IMR-90 (cell line): ENCODE measurements at regions of chr1 and their contacts with region 1.

Region 1: DNA sequence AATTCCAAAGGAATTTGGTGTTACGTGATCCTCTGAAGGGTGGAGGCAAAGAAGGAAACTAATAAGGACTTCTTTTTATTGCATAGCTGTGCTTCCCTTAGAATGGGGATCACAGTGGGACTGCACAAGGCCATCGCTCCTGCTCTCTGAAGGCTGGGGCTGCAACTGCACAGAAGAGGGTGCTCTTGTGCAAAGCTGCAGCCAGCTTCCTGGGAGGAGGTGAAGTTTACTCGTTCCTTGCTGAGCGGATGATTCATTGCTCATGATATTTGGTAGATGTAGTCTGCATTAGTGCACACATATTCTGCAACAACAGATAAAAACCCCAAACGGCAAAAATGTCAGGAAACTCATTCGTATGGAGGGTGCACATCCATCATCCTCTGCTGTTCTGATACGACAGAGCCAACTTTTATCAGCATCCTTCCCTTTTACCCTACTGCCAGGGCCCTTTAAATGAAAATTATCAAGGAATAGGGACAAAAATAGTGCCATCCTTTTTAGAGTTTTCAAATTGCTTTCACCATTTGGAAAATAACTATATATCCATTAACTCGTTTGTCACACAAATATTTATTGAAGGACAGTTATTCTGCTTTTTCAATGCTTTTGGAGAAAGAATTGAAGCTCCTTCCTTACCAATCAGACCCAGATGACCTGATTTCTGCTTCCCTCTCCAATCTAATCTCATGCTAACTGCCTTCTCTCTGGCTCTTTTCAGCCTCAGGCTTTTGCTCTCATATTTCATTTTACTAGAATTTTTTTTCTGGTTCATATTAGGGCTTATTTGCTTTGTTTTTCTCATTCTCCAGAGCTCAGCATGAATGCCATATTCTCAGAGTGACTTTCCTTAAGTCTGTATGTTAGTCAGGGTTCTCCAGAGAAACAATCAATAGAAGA is 263.6 kb downstream of the DUSP10 start:
- DNase-seq: peak; percentile 91
- ATAC-seq: peak; percentile 100
- H3K4me3 ChIP-seq: no peak overlapping the region
- H3K27ac ChIP-seq: no peak overlapping the region
- H3K4me1 ChIP-seq: 0 out of 2 replicates have a peak, but pooled peaks cover 2% of the 10 kb centered on the region
- H3K27me3 ChIP-seq: no peaks in the 10 kb centered on the region
- CTCF ChIP-seq: peak; percentile 90
- POLR2A ChIP-seq: peak; percentile 49; the same call in 1 of the 2 replicates
- RAD21 ChIP-seq: peak; percentile 98

Region 2: DNA sequence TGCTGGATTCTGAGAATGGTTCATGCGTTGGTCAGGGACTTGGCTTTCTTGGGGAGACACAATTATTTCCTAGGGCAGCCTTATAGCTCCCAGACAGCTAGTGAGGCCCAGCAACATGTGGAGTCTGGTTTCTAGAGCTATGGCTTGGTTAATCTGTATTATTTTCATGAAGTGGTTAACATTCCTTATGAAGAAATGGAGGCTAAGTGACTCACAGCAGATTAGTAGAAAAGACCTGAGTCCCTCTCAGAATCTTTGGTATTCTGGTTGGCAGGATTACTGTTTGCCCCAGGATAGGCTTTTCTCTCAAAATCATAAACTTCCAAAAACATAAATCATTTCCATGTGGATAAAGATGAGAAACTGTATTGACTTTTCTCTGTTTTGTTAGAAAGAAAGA is 221.3 kb after region 1 on chr1:
- CTCF ChIA-PET with region 1: interaction called, 12 read pairs
- POLR2A ChIA-PET with region 1: no interaction called
- dilution Hi-C with region 1: no loop called
- in situ Hi-C with region 1: no loop called
- intact Hi-C with region 1: no loop called
- DNase-seq: peak; percentile 75
- ATAC-seq: peak; percentile 50
- H3K4me3 ChIP-seq: no peak overlapping the region
- H3K27ac ChIP-seq: peak overlapping the region; percentile 35; the same call in 1 of the 2 replicates
- H3K4me1 ChIP-seq: peaks cover 19% of the 10 kb centered on the region
- H3K27me3 ChIP-seq: no peaks in the 10 kb centered on the region
- CTCF ChIP-seq: no peak
- POLR2A ChIP-seq: no peak
- RAD21 ChIP-seq: no peak

Region 3: GRCh38 chr1:221715321-221716169 is 237.2 kb after region 1 on chr1:
- CTCF ChIA-PET with region 1: no interaction called
- POLR2A ChIA-PET with region 1: no interaction called
- dilution Hi-C with region 1: no loop called
- in situ Hi-C with region 1: no loop called
- intact Hi-C with region 1: loop called (anchors 5 kb)
- DNase-seq: peak; percentile 77
- ATAC-seq: peak; percentile 28
- H3K4me3 ChIP-seq: no peak overlapping the region
- H3K27ac ChIP-seq: peak overlapping the region; percentile 90
- H3K4me1 ChIP-seq: peaks cover 57% of the 10 kb centered on the region
- H3K27me3 ChIP-seq: no peaks in the 10 kb centered on the region
- CTCF ChIP-seq: no peak
- POLR2A ChIP-seq: no peak
- RAD21 ChIP-seq: no peak

Region 4: DNA sequence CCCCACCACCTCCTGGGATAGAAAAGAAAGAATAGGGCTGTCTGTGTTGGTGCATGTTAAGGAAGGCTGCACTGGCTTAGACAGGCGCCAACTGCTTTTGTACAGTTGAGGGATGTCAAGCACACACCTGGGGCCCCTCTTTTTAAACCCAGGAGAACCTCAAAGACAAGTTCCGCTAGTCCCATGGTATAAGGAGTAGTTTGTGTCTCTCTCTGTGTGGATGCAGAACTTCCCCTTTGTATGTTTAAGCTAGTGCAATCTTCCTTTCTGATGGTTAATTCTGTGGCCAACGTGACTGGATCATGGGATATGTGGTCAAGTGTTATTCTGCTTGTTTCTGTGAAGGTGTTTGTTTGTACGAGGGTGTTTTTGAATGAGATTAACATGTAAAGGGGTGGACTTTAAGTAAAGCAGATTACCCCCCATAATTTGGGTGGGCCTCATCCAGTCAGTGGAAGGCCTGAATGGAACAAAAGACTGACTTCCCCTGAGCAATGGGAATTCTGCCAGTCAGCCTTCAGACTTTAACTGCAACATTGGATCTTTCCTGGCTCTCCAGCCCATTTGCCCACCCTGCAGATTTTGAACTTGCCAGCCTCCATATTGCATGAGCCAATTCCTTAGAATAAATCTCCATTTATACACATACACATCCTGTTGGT is 273.1 kb after region 1 on chr1:
- CTCF ChIA-PET with region 1: no interaction called
- POLR2A ChIA-PET with region 1: no interaction called
- dilution Hi-C with region 1: no loop called
- in situ Hi-C with region 1: no loop called
- intact Hi-C with region 1: no loop called
- DNase-seq: no peak
- ATAC-seq: no peak
- H3K4me3 ChIP-seq: no peak overlapping the region
- H3K27ac ChIP-seq: no peak overlapping the region
- H3K4me1 ChIP-seq: peaks cover 1% of the 10 kb centered on the region; the same call in 1 of the 2 replicates
- H3K27me3 ChIP-seq: no peaks in the 10 kb centered on the region
- CTCF ChIP-seq: no peak
- POLR2A ChIP-seq: no peak
- RAD21 ChIP-seq: no peak

Region 5: GRCh38 chr1:221886743-221887413 is 408.6 kb after region 1 on chr1:
- CTCF ChIA-PET with region 1: no interaction called
- POLR2A ChIA-PET with region 1: no interaction called
- dilution Hi-C with region 1: no loop called
- in situ Hi-C with region 1: no loop called
- intact Hi-C with region 1: loop called (anchors 10 kb)
- DNase-seq: peak; percentile 88
- ATAC-seq: peak; percentile 97
- H3K4me3 ChIP-seq: no peak overlapping the region
- H3K27ac ChIP-seq: peak overlapping the region; percentile 2; the same call in 1 of the 2 replicates
- H3K4me1 ChIP-seq: peaks cover 8% of the 10 kb centered on the region
- H3K27me3 ChIP-seq: no peaks in the 10 kb centered on the region
- CTCF ChIP-seq: peak; percentile 12; the same call in 1 of the 2 replicates
- POLR2A ChIP-seq: no peak
- RAD21 ChIP-seq: peak; percentile 27

Region 6: DNA sequence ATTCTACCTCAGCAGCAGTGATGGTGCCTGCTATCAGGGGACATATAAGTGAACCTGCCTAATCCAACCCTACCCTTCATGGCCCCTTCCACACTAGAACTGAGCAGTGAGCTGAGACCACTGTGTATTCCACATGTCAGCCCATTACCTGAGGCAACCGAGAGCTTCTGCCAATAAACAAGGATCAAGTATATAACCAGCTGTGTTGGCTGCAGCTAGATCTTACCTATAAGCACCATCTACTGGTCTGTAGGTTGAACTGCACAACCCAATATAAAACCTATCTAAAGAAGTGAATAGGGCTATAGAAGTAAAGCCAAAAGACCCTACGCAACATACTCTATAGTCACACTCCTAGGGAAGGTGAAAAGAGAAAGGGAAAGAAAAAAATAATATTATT is 692.7 kb after region 1 on chr1:
- CTCF ChIA-PET with region 1: interaction called, 3 read pairs
- POLR2A ChIA-PET with region 1: no interaction called
- dilution Hi-C with region 1: no loop called
- in situ Hi-C with region 1: loop called (anchors 5 kb)
- intact Hi-C with region 1: loop called (anchors 5 kb)
- DNase-seq: peak; percentile 70
- ATAC-seq: peak; percentile 68
- H3K4me3 ChIP-seq: no peak overlapping the region
- H3K27ac ChIP-seq: no peak overlapping the region
- H3K4me1 ChIP-seq: peaks cover 2% of the 10 kb centered on the region
- H3K27me3 ChIP-seq: no peaks in the 10 kb centered on the region
- CTCF ChIP-seq: peak; percentile 58
- POLR2A ChIP-seq: no peak
- RAD21 ChIP-seq: peak; percentile 76

Region 7: GRCh38 chr1:222240536-222241181 is 762.4 kb after region 1 on chr1:
- CTCF ChIA-PET with region 1: no interaction called
- POLR2A ChIA-PET with region 1: no interaction called
- dilution Hi-C with region 1: no loop called
- in situ Hi-C with region 1: no loop called
- intact Hi-C with region 1: loop called (anchors 10 kb)
- DNase-seq: peak; percentile 89
- ATAC-seq: peak; percentile 98
- H3K4me3 ChIP-seq: no peak overlapping the region
- H3K27ac ChIP-seq: peak overlapping the region; percentile 31; the same call in 1 of the 2 replicates
- H3K4me1 ChIP-seq: peaks cover 3% of the 10 kb centered on the region; the same call in 1 of the 2 replicates
- H3K27me3 ChIP-seq: no peaks in the 10 kb centered on the region
- CTCF ChIP-seq: no peak
- POLR2A ChIP-seq: no peak
- RAD21 ChIP-seq: 0 out of 2 replicates have a peak, but pooled peaks have one; percentile 18